ENCODE measurements at regions of chr20 and their contacts with region 1.

Region 1: GRCh38 chr20:45971675-45972499 is at the start of gene ZNF335:
- DNase-seq: peak; percentile 92 to 98 (median 96)
- H3K4me3 ChIP-seq: peak within 1 kb of the TSS; percentile 79 to 97
- H3K4me3 Mint-ChIP-seq: peak within 1 kb of the TSS; percentile 91 to 99 (median 95)
- H3K27ac ChIP-seq: peak within 1 kb of the TSS; percentile 100
- H3K27ac Mint-ChIP-seq: peak within 1 kb of the TSS; percentile 99 to 100 (median 100)
- H3K4me1 ChIP-seq: peaks cover 30% of the 10 kb centered on the region
- H3K4me1 Mint-ChIP-seq: peaks cover 14 to 33% (median 22%) of the 10 kb centered on the region in 4 donors
- H3K27me3 ChIP-seq: no peaks in the 10 kb centered on the region
- H3K27me3 Mint-ChIP-seq: peaks cover 2 to 8% of the 10 kb centered on the region in 2 donors
- total RNA-seq, gene ZNF335: 62.5 to 63.2 TPM

Region 2: DNA sequence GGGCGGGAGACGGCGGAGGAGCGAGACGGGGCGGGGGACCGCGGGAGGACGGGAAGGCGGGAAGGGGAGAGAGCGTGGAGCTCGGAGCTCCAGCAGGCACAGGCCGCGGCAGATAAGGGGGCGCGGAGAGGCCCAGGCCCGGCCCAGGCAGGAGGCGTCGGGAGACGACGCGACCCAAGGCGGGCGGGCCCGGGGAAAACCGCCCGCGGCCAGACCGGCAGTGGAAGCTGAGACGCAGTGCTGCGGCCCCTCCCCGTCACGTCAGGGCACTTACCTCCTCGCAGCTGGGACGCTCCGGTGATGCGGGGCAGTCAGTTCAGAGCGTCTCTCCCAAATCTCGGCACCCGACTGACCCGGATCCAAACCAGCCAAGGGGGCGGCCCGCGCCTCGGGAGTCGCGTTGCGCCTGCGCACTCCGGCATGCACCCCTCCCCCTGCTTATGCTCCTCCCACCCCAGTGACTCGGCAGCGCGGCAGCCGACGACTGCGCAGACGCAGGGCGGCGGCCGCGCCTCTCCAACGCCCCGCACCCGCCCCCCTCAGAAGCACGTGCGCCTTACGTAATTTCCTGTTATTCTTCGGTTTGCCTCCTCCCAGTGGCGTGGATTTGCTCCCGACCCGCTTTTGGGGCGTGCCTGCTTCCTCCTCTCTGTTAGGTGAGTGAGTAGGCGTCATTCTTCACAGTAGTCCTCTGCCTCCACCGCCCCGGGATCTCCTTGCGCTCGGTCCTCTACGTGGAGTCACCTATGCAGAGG is 1761.3 kb before region 1 on chr20 and contains the start of gene OSER1:
- CTCF ChIA-PET with region 1: no interaction called
- POLR2A ChIA-PET with region 1: no interaction called
- intact Hi-C with region 1: loop called (anchors 10 kb)
- DNase-seq: peak; percentile 99
- H3K4me3 ChIP-seq: peak within 1 kb of the TSS; percentile 77 to 78
- H3K4me3 Mint-ChIP-seq: peak within 1 kb of the TSS; percentile 85 to 99 (median 94)
- H3K27ac ChIP-seq: peak within 1 kb of the TSS; percentile 98
- H3K27ac Mint-ChIP-seq: peak within 1 kb of the TSS; percentile 90 to 100 (median 98)
- H3K4me1 ChIP-seq: peaks cover 53% of the 10 kb centered on the region
- H3K4me1 Mint-ChIP-seq: peaks cover 42 to 79% (median 56%) of the 10 kb centered on the region in 4 donors
- H3K27me3 ChIP-seq: no peaks in the 10 kb centered on the region
- H3K27me3 Mint-ChIP-seq: no peaks in the 10 kb centered on the region
- total RNA-seq, gene OSER1: 35.5 to 36.6 TPM

Region 3: DNA sequence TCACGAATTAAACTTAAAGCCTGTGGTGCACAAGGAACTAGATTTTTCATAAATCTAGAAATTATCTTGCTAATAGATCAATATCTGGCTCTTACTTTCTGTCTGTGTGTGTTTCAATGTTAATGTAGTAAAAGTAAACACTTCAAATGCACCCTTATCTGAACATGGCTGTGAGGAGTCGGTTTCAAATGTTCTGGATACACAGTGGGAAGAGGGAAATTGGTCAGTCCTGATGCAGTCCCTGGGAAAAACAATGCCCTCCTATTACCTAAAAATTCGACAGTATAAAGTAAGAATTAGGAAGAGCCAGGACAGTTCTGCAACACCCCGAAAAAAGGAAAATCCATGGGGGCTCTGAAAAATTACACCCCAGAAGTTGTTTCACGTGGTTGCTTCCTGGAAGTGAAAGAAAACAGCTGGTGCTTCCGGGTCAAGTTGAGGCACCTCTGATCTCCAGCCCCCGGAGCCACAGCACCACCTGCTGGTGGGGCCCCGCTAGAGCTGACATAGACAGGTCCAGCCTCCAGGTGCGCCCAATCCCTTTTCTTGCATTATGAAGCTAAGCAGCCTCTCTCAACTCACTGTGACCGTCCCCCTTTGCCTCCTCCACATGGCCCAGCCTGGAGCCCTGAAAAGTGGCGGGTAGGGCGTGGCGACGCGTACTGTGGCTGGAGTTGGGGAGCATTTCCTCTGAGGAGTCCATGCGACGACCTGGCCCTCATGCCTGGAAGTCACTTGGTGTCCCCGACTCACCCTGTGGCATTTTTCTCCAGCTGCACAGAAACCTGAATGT is 742.4 kb before region 1 on chr20:
- CTCF ChIA-PET with region 1: no interaction called
- POLR2A ChIA-PET with region 1: no interaction called
- intact Hi-C with region 1: no loop called
- DNase-seq: peak in 1 of 5 donors; percentile 7
- H3K4me3 ChIP-seq: no peak overlapping the region
- H3K4me3 Mint-ChIP-seq: no peak overlapping the region
- H3K27ac ChIP-seq: no peak overlapping the region
- H3K27ac Mint-ChIP-seq: no peak overlapping the region
- H3K4me1 ChIP-seq: no peaks in the 10 kb centered on the region
- H3K4me1 Mint-ChIP-seq: no peaks in the 10 kb centered on the region
- H3K27me3 ChIP-seq: no peaks in the 10 kb centered on the region
- H3K27me3 Mint-ChIP-seq: peaks cover 21 to 33% of the 10 kb centered on the region in 2 donors

Region 4: GRCh38 chr20:45812157-45813020 is 159.5 kb before region 1 on chr20 and contains the start of gene UBE2C:
- CTCF ChIA-PET with region 1: no interaction called
- POLR2A ChIA-PET with region 1: interaction called, 4 read pairs
- intact Hi-C with region 1: loop called (anchors 1 kb)
- DNase-seq: peak; percentile 92 to 96 (median 94)
- H3K4me3 ChIP-seq: peak within 1 kb of the TSS; percentile 37 to 68
- H3K4me3 Mint-ChIP-seq: peak within 1 kb of the TSS; percentile 82 to 92 (median 86)
- H3K27ac ChIP-seq: peak within 1 kb of the TSS; percentile 44
- H3K27ac Mint-ChIP-seq: peak within 1 kb of the TSS; percentile 53 to 89 (median 70)
- H3K4me1 ChIP-seq: peaks cover 15% of the 10 kb centered on the region
- H3K4me1 Mint-ChIP-seq: peaks cover 7 to 23% (median 14%) of the 10 kb centered on the region in 4 donors
- H3K27me3 ChIP-seq: no peaks in the 10 kb centered on the region
- H3K27me3 Mint-ChIP-seq: no peaks in the 10 kb centered on the region
- total RNA-seq, gene UBE2C: 0.55 to 0.61 TPM

Region 5: DNA sequence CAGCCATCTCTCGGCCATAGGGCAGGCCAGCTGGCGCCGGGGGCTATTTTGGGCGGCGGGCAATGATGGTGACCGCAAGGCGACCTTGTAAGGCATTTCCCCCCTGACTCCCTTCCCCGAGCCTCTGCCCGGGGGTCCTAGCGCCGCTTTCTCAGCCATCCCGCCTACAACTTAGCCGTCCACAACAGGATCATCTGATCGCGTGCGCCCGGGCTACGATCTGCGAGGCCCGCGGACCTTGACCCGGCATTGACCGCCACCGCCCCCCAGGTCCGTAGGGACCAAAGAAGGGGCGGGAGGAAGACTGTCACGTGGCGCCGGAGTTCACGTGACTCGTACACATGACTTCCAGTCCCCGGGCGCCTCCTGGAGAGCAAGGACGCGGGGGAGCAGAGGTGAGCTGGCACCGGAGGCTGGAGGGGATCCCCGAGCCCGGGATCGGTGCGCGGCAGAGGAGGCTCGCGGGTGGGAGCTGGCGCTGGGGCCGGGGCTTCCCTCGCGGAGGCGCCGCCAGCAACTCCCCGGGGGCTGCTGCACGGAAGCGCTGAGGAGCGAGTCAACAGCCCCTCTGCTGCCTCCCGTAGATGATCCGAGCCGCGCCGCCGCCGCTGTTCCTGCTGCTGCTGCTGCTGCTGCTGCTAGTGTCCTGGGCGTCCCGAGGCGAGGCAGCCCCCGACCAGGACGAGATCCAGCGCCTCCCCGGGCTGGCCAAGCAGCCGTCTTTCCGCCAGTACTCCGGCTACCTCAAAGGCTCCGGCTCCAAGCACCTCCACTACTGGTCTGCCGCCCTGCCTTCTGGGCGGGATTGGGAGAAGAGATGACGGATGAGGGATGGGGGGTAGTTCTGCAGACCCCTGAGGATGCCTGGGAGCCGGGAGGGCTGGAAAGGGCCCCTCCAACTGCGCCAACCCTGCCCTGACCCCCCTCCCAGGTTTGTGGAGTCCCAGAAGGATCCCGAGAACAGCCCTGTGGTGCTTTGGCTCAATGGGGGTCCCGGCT is 80.6 kb before region 1 on chr20 and contains the starts of genes CTSA and NEURL2:
- CTCF ChIA-PET with region 1: interaction called, 13 read pairs
- POLR2A ChIA-PET with region 1: interaction called, 44 read pairs
- intact Hi-C with region 1: loop called (anchors 1 kb)
- DNase-seq: peak; percentile 79 to 88 (median 83)
- H3K4me3 ChIP-seq: peak within 1 kb of the TSS; percentile 69 to 79
- H3K4me3 Mint-ChIP-seq: peak within 1 kb of the TSS; percentile 91 to 97 (median 93)
- H3K27ac ChIP-seq: peak within 1 kb of the TSS; percentile 74
- H3K27ac Mint-ChIP-seq: peak within 1 kb of the TSS; percentile 76 to 94 (median 90)
- H3K4me1 ChIP-seq: peaks cover 37% of the 10 kb centered on the region
- H3K4me1 Mint-ChIP-seq: peaks cover 19 to 48% (median 33%) of the 10 kb centered on the region in 4 donors
- H3K27me3 ChIP-seq: no peaks in the 10 kb centered on the region
- H3K27me3 Mint-ChIP-seq: no peaks in the 10 kb centered on the region
- total RNA-seq, gene CTSA: 102 to 103 TPM
- total RNA-seq, gene NEURL2: 5.5 to 5.6 TPM

Region 6: DNA sequence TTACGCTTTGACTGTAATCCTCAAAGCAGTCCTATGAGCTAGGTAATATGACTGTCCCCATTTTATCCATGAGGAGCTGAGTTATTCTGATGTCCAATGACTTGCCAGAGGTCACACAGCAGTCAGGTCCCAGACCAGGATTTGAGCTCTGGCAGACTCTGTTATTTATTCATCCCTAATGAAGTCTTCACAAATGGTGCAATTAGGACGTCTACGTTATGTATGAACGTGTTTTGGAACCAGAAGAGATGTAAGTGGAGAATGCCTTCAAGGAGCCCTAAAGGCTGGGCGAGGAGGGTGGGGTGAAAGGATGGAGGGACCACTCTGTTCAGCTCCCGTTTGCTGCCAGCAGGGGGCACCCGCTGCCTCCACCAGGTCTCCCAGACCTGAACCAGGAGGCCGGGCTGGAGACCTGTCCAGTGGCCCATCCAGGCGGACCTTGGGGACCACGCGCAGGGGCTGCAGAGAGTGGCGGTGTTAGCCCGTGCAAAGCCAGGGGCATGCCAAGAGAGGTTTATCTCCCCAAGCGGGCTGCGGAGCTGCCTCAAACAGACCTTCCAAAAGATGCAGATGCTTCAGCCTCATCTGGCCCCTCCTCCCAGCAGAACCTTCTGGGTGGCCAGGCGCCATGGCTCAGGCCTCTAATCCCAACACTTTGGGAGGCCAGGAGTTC is 15.4 kb after region 1 on chr20:
- CTCF ChIA-PET with region 1: interaction called, 26 read pairs
- POLR2A ChIA-PET with region 1: interaction called, 12 read pairs
- intact Hi-C with region 1: no loop called
- DNase-seq: peak; percentile 67 to 76 (median 70)
- H3K4me3 ChIP-seq: no peak overlapping the region
- H3K4me3 Mint-ChIP-seq: no peak overlapping the region
- H3K27ac ChIP-seq: no peak overlapping the region
- H3K27ac Mint-ChIP-seq: no peak overlapping the region
- H3K4me1 ChIP-seq: no peaks in the 10 kb centered on the region
- H3K4me1 Mint-ChIP-seq: peaks cover 0 to 4% (median 3%) of the 10 kb centered on the region in 4 donors
- H3K27me3 ChIP-seq: no peaks in the 10 kb centered on the region
- H3K27me3 Mint-ChIP-seq: no peaks in the 10 kb centered on the region

Region 7: DNA sequence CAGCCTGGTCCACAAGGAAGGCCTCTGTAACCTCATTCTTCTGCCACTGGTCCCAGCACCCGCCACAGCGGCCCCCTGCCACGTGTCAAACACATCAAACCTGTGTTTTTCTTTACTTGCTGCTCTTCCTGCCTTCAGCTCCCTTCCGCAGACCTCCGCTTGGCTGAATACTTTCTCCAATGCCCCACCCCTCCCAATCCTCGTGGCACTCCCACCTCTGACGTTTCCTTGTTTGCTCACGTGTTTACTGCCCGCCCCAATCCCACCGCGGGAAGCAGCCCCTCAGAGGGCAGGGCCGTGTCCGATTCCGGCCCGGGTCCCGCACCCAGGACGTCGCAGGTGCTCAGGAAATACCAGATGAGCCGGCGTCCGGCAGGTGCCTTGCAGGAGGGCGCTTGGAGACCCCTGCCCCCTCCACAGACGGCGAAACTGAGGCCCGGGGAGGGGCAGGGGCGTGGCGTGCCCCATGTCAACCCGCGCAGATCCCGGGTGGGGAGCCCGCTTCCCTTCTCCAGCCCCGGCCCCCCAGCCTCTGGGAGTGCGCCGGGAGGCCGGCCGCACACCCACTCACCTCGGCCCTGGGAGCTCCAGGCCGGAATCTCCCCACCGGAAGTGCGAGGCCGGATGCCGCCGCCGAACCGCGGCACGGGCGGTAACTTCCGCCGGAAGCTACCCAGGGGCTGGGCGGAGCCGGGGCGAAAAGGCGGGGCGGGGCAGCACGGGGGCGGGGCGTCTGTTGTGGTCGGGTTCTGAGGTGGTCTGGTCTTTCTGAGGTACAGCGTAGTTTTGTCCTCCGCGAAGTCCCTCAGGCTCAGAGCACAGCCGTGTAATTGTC is 392.1 kb after region 1 on chr20:
- CTCF ChIA-PET with region 1: no interaction called
- POLR2A ChIA-PET with region 1: interaction called, 11 read pairs
- intact Hi-C with region 1: loop called (anchors 2 kb)
- DNase-seq: peak; percentile 82 to 89 (median 86)
- H3K4me3 ChIP-seq: peak overlapping the region; percentile 73 to 95
- H3K4me3 Mint-ChIP-seq: peak overlapping the region; percentile 88 to 97 (median 92)
- H3K27ac ChIP-seq: peak overlapping the region; percentile 99
- H3K27ac Mint-ChIP-seq: peak overlapping the region; percentile 84 to 99 (median 98)
- H3K4me1 ChIP-seq: peaks cover 78% of the 10 kb centered on the region
- H3K4me1 Mint-ChIP-seq: peaks cover 63 to 83% (median 73%) of the 10 kb centered on the region in 4 donors
- H3K27me3 ChIP-seq: no peaks in the 10 kb centered on the region
- H3K27me3 Mint-ChIP-seq: no peaks in the 10 kb centered on the region